ENCODE measurements at regions of chr3 and their contacts with region 1.

Region 1: DNA sequence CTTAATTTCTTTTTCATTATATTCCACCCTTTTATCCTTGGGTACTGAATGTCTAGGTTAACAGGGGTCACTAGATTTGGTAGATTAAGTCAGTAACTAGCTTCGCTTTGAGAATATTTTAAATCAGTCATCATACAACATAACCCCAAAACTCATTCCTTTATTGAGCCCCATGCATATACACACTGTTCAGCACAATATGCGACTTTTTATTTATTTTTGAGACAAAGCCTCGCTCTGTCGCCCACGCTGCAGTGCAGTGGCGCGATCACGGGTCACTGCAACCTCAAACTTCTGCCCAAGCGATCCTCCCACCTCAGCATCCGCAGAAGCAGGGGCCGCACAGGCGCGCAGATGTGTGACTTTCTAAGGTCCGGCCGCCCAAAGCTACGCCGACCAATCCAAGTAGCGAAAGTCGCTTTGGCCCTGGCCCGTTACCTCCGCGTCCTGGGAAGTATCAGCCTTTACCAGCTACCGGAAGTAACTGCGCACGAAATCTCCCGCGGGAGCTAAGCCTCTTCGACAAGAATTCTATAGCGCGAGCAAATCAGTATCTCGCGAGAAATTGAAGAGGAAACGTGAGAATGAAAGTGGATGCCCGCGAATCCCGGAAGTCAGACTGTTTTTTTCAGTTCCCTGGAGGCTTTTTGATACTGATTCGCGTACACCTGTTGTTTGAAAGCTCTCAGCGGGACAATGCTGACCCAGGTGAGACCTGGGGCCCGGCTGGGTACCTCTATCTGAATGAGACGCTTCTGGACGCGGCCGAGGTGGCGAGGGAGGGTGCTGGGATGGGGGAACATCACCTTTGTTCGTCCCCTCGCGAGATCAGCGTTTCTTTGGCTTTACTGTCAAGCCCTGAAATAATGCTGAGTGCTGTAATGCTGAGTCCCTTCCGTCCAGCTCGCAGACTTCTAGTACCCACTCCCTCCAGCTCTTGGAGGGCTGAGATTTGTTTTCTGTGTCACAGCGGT is at the starts of genes DHFR2 and NSUN3:
- DNase-seq: peak; percentile 95
- ATAC-seq: peak; percentile 98
- total RNA-seq, gene DHFR2: 2.7 TPM
- total RNA-seq, gene NSUN3: 4.0 TPM

Region 2: GRCh38 chr3:94004301-94004910 is 58.3 kb before region 1 on chr3:
- intact Hi-C with region 1: loop called (anchors 5 kb)
- DNase-seq: no peak
- ATAC-seq: peak; percentile 87

Measured in Right ventricle myocardium superior (tissue), 1 donor.